ENCODE measurements at regions of chr12 and their contacts with region 1.

Region 1: DNA sequence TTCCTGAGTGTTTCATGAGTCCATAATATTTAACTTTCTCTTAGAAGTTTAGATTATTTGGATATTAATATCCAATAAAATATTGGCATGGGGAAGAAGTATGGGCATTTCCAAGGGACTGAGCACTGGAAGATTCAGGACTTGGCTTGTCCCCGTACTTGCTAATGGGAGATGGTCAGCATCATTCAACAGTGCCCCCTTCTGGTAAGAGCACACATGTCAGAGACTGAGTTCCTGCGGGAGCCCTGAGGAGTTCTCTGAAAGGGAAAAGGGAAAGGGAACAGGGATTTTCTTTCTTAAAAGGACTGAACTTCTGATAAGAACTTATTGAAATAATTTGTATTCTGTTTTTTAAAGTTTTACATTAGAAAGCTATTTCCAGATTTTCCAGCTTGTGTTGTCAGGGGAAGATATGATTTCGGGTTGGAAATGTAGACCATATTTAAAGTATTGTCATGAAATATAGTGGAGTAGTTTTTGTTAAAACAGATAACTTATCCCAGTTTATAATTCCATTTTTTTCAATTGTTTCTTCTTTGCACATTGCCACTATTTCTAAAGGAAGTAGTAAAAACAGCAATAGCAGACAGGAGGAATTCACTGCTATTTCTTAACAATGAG is 59.8 kb upstream of the C12orf71 start:
- DNase-seq: no peak
- ATAC-seq: peak; percentile 80
- H3K4me3 ChIP-seq: no peak overlapping the region
- H3K27ac ChIP-seq: no peak overlapping the region
- H3K4me1 ChIP-seq: peaks cover 9% of the 10 kb centered on the region; the same call in 1 of the 2 replicates
- H3K27me3 ChIP-seq: no peaks in the 10 kb centered on the region
- CTCF ChIP-seq: peak; percentile 72 to 79 (median 76)
- EP300 ChIP-seq: no peak
- POLR2A ChIP-seq: no peak
- RAD21 ChIP-seq: peak; percentile 87

Region 2: DNA sequence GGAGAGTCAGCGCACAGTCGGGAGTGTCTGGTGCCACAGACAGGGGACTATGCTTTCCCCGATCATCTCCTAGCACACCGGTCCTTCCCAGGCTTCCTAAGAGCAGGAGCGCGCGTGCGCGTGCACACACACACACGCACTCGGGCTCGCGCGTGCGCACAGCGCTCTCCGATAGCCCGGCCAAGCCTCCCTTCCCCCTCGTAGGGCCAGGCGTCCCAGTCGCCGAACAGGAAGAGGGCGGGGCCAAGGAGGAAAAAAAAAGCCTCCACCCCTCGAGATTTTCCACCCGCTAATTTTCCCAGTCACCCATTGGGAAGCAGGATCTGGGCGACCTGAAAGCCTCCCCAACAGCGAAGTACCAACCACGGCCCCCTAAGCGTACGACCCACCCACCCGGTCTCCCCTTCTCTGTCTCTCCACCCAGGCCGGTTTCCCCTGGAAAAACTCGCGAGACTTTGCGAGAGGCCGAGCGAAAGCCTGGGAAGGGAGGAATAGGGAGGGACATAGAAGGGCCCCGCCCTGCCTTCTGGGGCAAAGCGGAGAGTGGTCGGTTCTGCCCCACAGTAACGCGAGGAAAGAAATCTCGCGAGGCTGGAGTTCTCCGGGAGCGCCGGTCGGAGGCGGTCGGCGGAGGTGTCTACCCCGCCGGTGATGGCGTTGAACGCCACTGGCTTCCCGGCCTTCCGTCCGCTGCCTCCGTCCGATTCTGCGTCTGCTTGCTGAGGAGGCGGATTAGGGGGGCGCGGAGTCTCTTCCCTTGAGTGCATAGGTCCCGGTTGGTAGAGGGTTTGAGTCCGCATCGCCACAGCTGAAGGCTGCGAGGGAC is 204.1 kb before region 1 on chr12 and contains the starts of genes FGFR1OP2 and INTS13:
- CTCF ChIA-PET with region 1: no interaction called
- POLR2A ChIA-PET with region 1: no interaction called
- RAD21 ChIA-PET with region 1: no interaction called
- SMC1A ChIA-PET with region 1: no interaction called
- in situ Hi-C with region 1: no loop called
- intact Hi-C with region 1: loop called (anchors 10 kb)
- DNase-seq: peak; percentile 95
- ATAC-seq: peak; percentile 87
- H3K4me3 ChIP-seq: peak within 1 kb of the TSS; percentile 99
- H3K27ac ChIP-seq: peak within 1 kb of the TSS; percentile 94
- H3K4me1 ChIP-seq: peaks cover 5% of the 10 kb centered on the region
- H3K27me3 ChIP-seq: no peaks in the 10 kb centered on the region
- CTCF ChIP-seq: no peak
- EP300 ChIP-seq: peak in 1 of 2 experiments; percentile 27; a peak in 1 of 4 replicates
- POLR2A ChIP-seq: peak; percentile 97
- RAD21 ChIP-seq: no peak
- polyA plus RNA-seq, gene FGFR1OP2: 29.0 to 32.2 TPM
- polyA plus RNA-seq, gene INTS13: 43.4 to 65.4 TPM

Region 3: GRCh38 chr12:27024291-27024690 is 117.9 kb before region 1 on chr12:
- CTCF ChIA-PET with region 1: interaction called, 17 read pairs
- POLR2A ChIA-PET with region 1: interaction called, 3 read pairs
- RAD21 ChIA-PET with region 1: interaction called, 10 read pairs
- SMC1A ChIA-PET with region 1: interaction called, 3 read pairs
- in situ Hi-C with region 1: no loop called
- intact Hi-C with region 1: no loop called
- DNase-seq: no peak
- ATAC-seq: no peak
- H3K4me3 ChIP-seq: peak overlapping the region; percentile 91; the same call in 1 of the 2 replicates
- H3K27ac ChIP-seq: no peak overlapping the region
- H3K4me1 ChIP-seq: peaks cover 4% of the 10 kb centered on the region; the same call in 1 of the 2 replicates
- H3K27me3 ChIP-seq: no peaks in the 10 kb centered on the region
- CTCF ChIP-seq: no peak
- EP300 ChIP-seq: no peak
- POLR2A ChIP-seq: no peak
- RAD21 ChIP-seq: no peak

Region 4: GRCh38 chr12:27034607-27035293 is 107.5 kb before region 1 on chr12:
- CTCF ChIA-PET with region 1: interaction called, 17 read pairs
- POLR2A ChIA-PET with region 1: no interaction called
- RAD21 ChIA-PET with region 1: interaction called, 4 read pairs
- SMC1A ChIA-PET with region 1: interaction called, 5 read pairs
- in situ Hi-C with region 1: no loop called
- intact Hi-C with region 1: loop called (anchors 1 kb)
- DNase-seq: no peak
- ATAC-seq: no peak
- H3K4me3 ChIP-seq: no peak overlapping the region
- H3K27ac ChIP-seq: no peak overlapping the region
- H3K4me1 ChIP-seq: no peaks in the 10 kb centered on the region
- H3K27me3 ChIP-seq: no peaks in the 10 kb centered on the region
- CTCF ChIP-seq: no peak
- EP300 ChIP-seq: no peak
- POLR2A ChIP-seq: no peak
- RAD21 ChIP-seq: no peak

Region 5: DNA sequence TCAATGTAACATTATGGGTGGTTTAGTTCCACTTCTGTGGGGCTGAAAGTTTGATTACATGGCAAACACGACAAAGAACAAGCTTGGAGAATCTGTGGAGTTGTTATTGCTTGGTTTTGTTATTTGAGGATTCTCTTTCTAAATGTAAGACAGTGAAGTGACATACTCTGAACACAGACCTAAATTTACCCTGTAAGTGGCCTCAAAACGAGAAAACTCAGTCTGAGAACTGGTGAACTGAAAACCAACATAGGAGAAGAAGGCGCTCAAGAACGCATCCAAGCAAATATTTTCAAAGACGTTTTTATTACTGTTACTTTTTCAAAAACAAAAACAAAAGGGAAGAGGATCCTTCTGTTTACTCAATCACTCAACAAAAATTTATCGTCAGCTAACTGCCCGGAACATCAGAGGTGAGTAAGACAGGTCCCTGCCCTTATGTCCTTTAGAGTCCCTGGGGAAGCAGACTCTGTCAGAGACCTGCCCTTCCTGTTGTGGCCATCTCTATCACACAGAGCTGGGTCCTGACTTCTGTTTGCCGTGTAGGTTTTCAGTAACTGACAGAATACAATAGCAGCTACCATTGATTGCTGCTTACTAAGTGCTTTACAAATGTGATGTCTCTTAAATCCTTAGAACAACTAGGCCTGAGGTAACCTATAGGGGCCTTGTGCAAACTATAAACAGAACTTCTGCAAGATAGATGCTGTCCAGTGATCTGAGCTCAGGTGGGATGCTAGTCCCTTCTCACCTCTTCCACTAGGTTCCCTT is 19.4 kb after region 1 on chr12:
- CTCF ChIA-PET with region 1: interaction called, 6 read pairs
- POLR2A ChIA-PET with region 1: interaction called, 3 read pairs
- RAD21 ChIA-PET with region 1: interaction called, 3 read pairs
- SMC1A ChIA-PET with region 1: interaction called, 10 read pairs
- in situ Hi-C with region 1: no loop called
- intact Hi-C with region 1: no loop called
- DNase-seq: peak; percentile 62
- ATAC-seq: peak; percentile 93
- H3K4me3 ChIP-seq: peak overlapping the region; percentile 15; the same call in 1 of the 2 replicates
- H3K27ac ChIP-seq: peak overlapping the region; percentile 64
- H3K4me1 ChIP-seq: peaks cover 3% of the 10 kb centered on the region; the same call in 1 of the 2 replicates
- H3K27me3 ChIP-seq: no peaks in the 10 kb centered on the region
- CTCF ChIP-seq: no peak
- EP300 ChIP-seq: no peak
- POLR2A ChIP-seq: no peak
- RAD21 ChIP-seq: no peak

Region 6: DNA sequence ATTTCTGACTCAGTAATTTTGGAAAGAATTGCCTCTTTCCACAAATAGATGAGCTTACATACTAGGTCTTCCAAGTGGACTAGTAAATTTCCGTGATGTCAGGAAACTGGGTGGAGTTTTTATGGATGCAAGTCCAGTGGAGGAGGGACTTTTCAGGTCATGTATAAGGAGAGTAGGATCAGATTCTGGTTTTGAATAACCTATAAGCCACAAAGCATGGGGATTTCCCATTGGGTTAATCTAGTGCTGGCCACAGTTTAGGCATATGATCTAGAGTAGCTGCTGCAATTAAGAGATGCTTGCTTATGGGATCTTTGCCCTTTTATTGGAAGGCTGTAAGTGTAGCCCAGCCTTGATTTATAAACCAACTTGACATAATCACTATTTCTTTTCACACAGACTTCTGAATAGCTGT is 135.6 kb after region 1 on chr12:
- CTCF ChIA-PET with region 1: interaction called, 4 read pairs
- POLR2A ChIA-PET with region 1: no interaction called
- RAD21 ChIA-PET with region 1: no interaction called
- SMC1A ChIA-PET with region 1: interaction called, 15 read pairs
- in situ Hi-C with region 1: no loop called
- intact Hi-C with region 1: no loop called
- DNase-seq: peak; percentile 73
- ATAC-seq: peak; percentile 91
- H3K4me3 ChIP-seq: no peak overlapping the region
- H3K27ac ChIP-seq: peak overlapping the region; percentile 61; the same call in 1 of the 2 replicates
- H3K4me1 ChIP-seq: peaks cover 22% of the 10 kb centered on the region
- H3K27me3 ChIP-seq: no peaks in the 10 kb centered on the region
- CTCF ChIP-seq: no peak
- EP300 ChIP-seq: peak; percentile 64 to 71; a peak in 3 of 4 replicates
- POLR2A ChIP-seq: no peak
- RAD21 ChIP-seq: no peak